Gastrocnemius medialis (tissue), 4 donors: ENCODE measurements at regions of chr7 and their contacts with region 1.

Region 1: GRCh38 chr7:114539575-114539974 is 125.0 kb downstream of the FOXP2 start:
- DNase-seq: no peak
- ATAC-seq: no peak
- H3K4me3 ChIP-seq: no peak overlapping the region
- H3K27ac ChIP-seq: no peak overlapping the region
- H3K4me1 ChIP-seq: no peaks in the 10 kb centered on the region
- H3K27me3 ChIP-seq: no peaks in the 10 kb centered on the region
- CTCF ChIP-seq: peak in 2 of 5 experiments; percentile 31 to 46
- POLR2A ChIP-seq: no peak

Region 2: GRCh38 chr7:114414156-114415063 is 125.2 kb before region 1 on chr7 and contains the start of gene FOXP2:
- in situ Hi-C with region 1: no loop called
- intact Hi-C with region 1: loop called (anchors 10 kb)
- DNase-seq: no peak
- ATAC-seq: peak in 1 of 2 donors; percentile 15
- H3K4me3 ChIP-seq: peak within 1 kb of the TSS; percentile 44 to 50 (median 45)
- H3K27ac ChIP-seq: peak within 1 kb of the TSS; percentile 74 to 84 (median 75)
- H3K4me1 ChIP-seq: peaks cover 47 to 54% of the 10 kb centered on the region in 2 donors
- H3K27me3 ChIP-seq: no peaks in the 10 kb centered on the region
- CTCF ChIP-seq: no peak
- POLR2A ChIP-seq: no peak
- total RNA-seq, gene FOXP2: 4.9 to 16.9 (median 7.5) TPM

Region 3: DNA sequence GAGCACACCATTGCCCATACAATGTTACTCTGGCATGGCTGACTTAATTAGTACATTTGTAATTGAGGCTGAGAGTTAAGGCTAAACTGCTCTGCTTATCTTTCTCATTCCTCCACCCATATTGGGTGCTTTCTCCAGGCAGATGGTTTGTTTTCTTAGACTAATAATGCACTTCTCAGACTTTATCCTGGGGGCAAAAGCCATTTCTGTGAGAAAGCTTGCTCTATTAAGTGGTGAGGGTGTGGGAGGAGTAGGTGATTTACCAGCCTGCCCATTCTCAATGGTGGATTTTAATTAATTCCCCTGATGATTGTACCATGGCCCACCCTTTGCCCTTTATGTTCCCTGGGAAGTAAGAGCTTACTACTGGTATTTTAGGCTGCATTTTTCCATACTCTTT is 49.9 kb after region 1 on chr7:
- in situ Hi-C with region 1: no loop called
- intact Hi-C with region 1: no loop called
- DNase-seq: no peak
- ATAC-seq: no peak
- H3K4me3 ChIP-seq: no peak overlapping the region
- H3K27ac ChIP-seq: no peak overlapping the region
- H3K4me1 ChIP-seq: no peaks in the 10 kb centered on the region
- H3K27me3 ChIP-seq: no peaks in the 10 kb centered on the region
- CTCF ChIP-seq: no peak
- POLR2A ChIP-seq: no peak

Region 4: GRCh38 chr7:114832906-114833595 is 293.5 kb after region 1 on chr7:
- in situ Hi-C with region 1: no loop called
- intact Hi-C with region 1: no loop called
- DNase-seq: no peak
- ATAC-seq: no peak
- H3K4me3 ChIP-seq: no peak overlapping the region
- H3K27ac ChIP-seq: no peak overlapping the region
- H3K4me1 ChIP-seq: no peaks in the 10 kb centered on the region
- H3K27me3 ChIP-seq: no peaks in the 10 kb centered on the region
- CTCF ChIP-seq: no peak
- POLR2A ChIP-seq: no peak